Activated B cell treated with CpG ODN at 0.5 μM for 24 hours (primary cell): ENCODE measurements at regions of chr17 and their contacts with region 1.

Region 1: GRCh38 chr17:8900626-8901585 is 33.4 kb upstream of the PIK3R6 start:
- DNase-seq: no peak
- ATAC-seq: peak; percentile 47
- H3K4me3 Mint-ChIP-seq: peak overlapping the region; percentile 53
- H3K27ac Mint-ChIP-seq: peak overlapping the region; percentile 86
- H3K4me1 Mint-ChIP-seq: peaks cover 66% of the 10 kb centered on the region
- H3K27me3 Mint-ChIP-seq: no peaks in the 10 kb centered on the region
- CTCF ChIP-seq: no peak

Region 2: DNA sequence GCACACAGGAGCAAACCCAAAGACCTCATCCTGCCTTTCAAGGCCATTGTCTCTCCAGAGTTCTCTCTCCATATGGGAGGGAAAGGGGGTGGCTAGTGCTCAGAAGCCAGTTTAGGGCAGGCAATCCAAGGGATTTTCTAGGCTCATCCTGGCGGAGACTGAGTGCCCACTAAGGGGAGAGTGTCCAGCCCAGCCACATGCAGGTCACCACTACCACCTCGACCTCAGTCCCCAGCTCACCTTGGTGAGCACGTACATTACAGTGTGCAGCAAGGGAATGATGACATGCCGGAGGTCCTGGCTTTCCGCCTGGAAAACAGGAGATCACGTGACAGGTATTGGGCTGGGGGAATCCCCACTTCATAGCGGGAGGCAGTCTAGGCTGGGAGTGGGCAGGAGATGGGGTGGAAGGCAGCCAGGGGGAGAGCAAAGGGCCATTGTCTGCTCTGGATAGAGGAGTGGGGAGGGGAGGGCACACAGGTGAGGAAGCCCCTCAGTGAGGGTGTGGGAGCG is 63.3 kb before region 1 on chr17:
- CTCF ChIA-PET with region 1: no interaction called
- POLR2A ChIA-PET with region 1: no interaction called
- intact Hi-C with region 1: no loop called
- DNase-seq: no peak
- ATAC-seq: no peak
- H3K4me3 Mint-ChIP-seq: no peak overlapping the region
- H3K27ac Mint-ChIP-seq: no peak overlapping the region
- H3K4me1 Mint-ChIP-seq: peaks cover 5% of the 10 kb centered on the region
- H3K27me3 Mint-ChIP-seq: no peaks in the 10 kb centered on the region
- CTCF ChIP-seq: no peak

Region 3: DNA sequence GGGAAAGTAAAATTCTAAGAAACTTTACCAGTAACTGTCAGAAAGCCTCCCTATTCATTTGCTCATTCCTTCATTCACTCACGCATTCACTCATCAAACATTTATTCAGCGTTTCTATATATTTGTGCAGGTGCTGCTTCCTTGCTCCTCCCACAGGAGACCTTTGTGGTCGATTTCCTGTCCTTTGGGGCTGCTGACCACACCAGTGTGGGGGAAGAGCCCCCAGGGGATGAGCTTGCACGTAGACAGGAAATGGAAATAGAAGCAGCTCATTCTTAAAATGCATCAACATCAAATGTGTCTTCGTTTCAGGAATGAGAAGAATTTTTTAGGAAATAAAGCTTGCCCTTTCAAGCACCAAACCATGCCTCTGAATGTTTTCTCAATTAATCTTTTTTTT is 43.0 kb before region 1 on chr17:
- CTCF ChIA-PET with region 1: interaction called, 9 read pairs
- POLR2A ChIA-PET with region 1: no interaction called
- intact Hi-C with region 1: loop called (anchors 1 kb)
- DNase-seq: peak; percentile 63
- ATAC-seq: peak; percentile 82
- H3K4me3 Mint-ChIP-seq: peak overlapping the region; percentile 70
- H3K27ac Mint-ChIP-seq: peak overlapping the region; percentile 65
- H3K4me1 Mint-ChIP-seq: peaks cover 51% of the 10 kb centered on the region
- H3K27me3 Mint-ChIP-seq: no peaks in the 10 kb centered on the region
- CTCF ChIP-seq: no peak

Region 4: GRCh38 chr17:8916466-8916865 is 15.6 kb after region 1 on chr17:
- CTCF ChIA-PET with region 1: interaction called, 23 read pairs
- POLR2A ChIA-PET with region 1: interaction called, 47 read pairs
- intact Hi-C with region 1: loop called (anchors 1 kb)
- DNase-seq: no peak
- ATAC-seq: no peak
- H3K4me3 Mint-ChIP-seq: no peak overlapping the region
- H3K27ac Mint-ChIP-seq: peak overlapping the region; percentile 25
- H3K4me1 Mint-ChIP-seq: peaks cover 73% of the 10 kb centered on the region
- H3K27me3 Mint-ChIP-seq: no peaks in the 10 kb centered on the region
- CTCF ChIP-seq: no peak

Region 5: DNA sequence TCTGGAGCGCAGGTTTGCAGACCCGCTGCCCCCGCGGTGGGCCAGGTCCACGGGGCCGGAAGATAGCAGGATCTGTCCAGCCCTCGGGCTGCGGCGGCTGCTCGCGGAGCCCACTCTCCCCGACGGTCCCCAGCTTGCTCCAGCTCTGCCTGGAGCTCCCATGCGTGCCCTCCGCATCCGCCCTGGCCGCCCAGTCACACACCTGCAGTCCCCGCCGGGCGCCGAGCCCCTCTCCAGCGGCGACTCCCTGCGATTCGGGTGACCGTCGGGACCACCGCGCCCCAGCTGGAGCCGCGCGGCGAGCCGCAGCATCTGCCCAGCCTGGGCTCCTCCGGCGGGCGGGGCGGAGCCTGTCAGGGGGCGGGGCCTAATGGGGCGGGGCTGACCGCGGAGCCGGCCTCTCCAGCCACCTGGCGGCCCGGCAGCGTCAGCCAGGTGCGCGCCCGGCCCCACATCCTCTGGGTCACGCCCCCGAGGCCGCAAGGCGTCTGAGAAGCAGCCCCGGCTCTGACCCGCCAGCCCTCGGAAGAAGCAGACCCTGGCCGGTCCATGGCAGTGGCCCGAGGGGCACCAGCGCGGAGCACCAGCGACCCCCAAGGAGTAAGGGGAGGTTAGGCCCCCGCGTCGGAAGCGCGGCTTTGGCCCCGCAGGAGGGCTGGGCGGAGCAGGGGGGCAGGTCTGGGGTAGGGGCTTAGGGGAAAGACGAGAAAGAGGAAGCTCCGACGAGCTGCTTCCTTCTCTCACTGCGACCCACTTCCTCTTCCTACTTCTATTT is 64.7 kb after region 1 on chr17 and contains the start of gene PIK3R5:
- CTCF ChIA-PET with region 1: interaction called, 7 read pairs
- POLR2A ChIA-PET with region 1: interaction called, 44 read pairs
- intact Hi-C with region 1: loop called (anchors 1 kb)
- DNase-seq: peak; percentile 88
- ATAC-seq: peak; percentile 87
- H3K4me3 Mint-ChIP-seq: peak within 1 kb of the TSS; percentile 88
- H3K27ac Mint-ChIP-seq: peak within 1 kb of the TSS; percentile 83
- H3K4me1 Mint-ChIP-seq: peaks cover 58% of the 10 kb centered on the region
- H3K27me3 Mint-ChIP-seq: no peaks in the 10 kb centered on the region
- CTCF ChIP-seq: no peak
- total RNA-seq, gene PIK3R5: 31.0 and 34.2 TPM in 2 replicates

Region 6: DNA sequence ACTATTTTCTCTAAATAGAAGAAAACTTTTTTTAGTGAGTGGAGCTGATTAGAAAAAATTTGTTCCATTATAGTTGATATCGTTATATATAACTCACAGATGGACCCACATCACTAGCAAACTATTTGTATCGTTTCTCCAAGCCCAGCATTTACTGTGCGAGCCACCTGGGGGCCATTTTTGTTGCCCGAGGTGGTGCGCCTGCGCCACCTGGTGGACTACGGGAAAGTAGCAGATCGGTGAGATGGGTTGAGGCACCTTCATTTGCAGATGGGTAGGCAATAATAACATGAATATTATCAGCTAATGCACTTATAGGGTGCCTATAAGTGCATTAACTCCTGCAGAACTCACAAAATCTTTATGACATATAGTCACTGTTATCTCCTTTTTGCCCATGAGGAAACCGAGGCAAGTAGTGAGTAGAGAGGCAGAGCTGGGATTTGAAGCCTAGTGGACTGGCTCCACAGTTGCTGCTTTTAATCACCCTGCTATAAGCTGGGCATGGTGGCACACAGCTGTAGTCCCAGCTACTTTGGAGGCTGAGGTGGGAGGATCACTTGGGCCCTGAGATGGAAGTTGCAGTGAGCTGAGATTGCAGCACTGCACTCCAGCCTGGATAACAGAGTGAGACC is 97.2 kb after region 1 on chr17:
- CTCF ChIA-PET with region 1: interaction called, 34 read pairs
- POLR2A ChIA-PET with region 1: interaction called, 4 read pairs
- intact Hi-C with region 1: no loop called
- DNase-seq: peak; percentile 72
- ATAC-seq: peak; percentile 74
- H3K4me3 Mint-ChIP-seq: no peak overlapping the region
- H3K27ac Mint-ChIP-seq: no peak overlapping the region
- H3K4me1 Mint-ChIP-seq: peaks cover 22% of the 10 kb centered on the region
- H3K27me3 Mint-ChIP-seq: peaks cover 10% of the 10 kb centered on the region
- CTCF ChIP-seq: peak; percentile 73